Activated B cell treated with CpG ODN at 0.5 μM for 24 hours (primary cell): ENCODE measurements at regions of chr21 and their contacts with region 1.

Region 1: DNA sequence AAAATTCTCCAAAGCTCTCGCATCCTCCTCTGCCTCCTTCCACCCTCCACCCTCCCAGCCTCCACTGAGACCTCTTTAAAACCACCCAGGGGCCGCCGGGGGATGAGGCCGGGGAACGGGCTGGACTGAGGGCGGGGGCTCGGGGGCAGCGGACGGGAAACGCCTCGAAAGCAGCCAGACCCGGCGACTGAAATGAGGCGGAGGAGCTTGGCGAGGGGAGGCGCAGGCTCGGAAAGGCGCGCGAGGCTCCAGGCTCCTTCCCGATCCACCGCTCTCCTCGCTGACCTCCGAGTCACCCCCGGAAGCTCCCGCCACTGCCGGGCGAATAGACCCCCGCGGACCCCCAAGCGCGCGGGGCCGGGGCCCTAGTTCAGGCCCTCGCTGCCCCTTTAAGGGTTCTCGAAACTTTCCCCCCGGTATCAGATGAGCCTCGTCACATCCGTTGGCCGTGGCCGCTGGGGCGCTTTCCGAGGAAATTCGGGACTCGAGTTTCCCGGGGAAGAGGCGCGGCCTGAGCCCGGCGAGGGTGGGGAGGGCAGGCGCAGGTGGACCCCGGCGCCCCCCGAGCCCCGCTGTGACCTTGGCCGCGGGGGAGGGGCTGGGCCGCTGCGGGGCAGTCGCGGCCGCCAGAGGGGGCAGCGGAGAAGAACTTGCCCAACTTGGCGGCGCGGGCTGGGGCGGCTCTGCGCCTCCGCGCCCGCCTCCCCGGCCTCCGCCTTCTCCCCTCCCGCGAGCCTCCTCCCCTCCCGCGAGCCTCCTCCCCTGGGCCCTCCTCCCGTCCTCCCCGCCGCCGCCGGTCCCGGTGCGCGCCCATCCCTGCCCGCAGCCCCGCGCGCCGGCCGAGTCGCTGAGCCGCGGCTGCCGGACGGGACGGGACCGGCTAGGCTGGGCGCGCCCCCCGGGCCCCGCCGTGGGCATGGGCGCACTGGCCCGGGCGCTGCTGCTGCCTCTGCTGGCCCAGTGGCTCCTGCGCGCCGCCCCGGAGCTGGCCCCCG is at the start of gene BACE2:
- DNase-seq: peak; percentile 77
- ATAC-seq: peak; percentile 87
- H3K4me3 Mint-ChIP-seq: peak within 1 kb of the TSS; percentile 88
- H3K27ac Mint-ChIP-seq: peak within 1 kb of the TSS; percentile 69
- H3K4me1 Mint-ChIP-seq: peaks cover 26% of the 10 kb centered on the region
- H3K27me3 Mint-ChIP-seq: peaks cover 5% of the 10 kb centered on the region
- CTCF ChIP-seq: no peak
- total RNA-seq, gene BACE2: 13.0 and 17.1 TPM in 2 replicates

Region 2: GRCh38 chr21:41121785-41122421 is 45.7 kb before region 1 on chr21:
- CTCF ChIA-PET with region 1: no interaction called
- POLR2A ChIA-PET with region 1: no interaction called
- intact Hi-C with region 1: no loop called
- DNase-seq: peak; percentile 41
- ATAC-seq: peak; percentile 31
- H3K4me3 Mint-ChIP-seq: no peak overlapping the region
- H3K27ac Mint-ChIP-seq: no peak overlapping the region
- H3K4me1 Mint-ChIP-seq: no peaks in the 10 kb centered on the region
- H3K27me3 Mint-ChIP-seq: peaks cover 5% of the 10 kb centered on the region
- CTCF ChIP-seq: no peak

Region 3: DNA sequence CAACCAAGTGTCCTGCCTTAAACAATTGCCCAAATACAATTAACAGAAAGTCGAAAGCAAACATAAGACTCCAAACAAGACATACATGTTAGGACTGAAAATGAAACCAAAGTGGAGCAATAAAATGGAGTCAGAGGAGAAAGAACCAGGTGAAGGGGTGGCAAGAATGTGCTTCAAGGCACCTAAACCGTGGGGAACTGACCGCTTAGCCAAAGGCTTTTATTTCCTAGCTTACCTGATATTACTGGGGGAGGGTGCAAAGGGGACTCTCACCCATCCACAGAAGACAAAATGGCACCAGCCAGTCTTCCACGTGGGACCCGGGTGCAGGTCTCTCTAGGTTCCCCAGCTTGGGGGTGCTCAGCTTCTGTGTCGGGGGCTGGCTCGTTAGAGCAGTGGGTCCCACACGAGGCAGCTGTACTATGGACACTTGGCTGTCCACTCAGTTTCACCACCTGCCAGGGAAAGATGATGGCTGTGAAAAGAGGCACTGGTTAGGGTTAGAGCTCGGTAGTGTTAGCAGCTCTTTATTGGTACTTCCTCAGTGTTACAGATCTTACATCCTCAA is 18.3 kb after region 1 on chr21:
- CTCF ChIA-PET with region 1: interaction called, 7 read pairs
- POLR2A ChIA-PET with region 1: interaction called, 6 read pairs
- intact Hi-C with region 1: loop called (anchors 2 kb)
- DNase-seq: no peak
- ATAC-seq: no peak
- H3K4me3 Mint-ChIP-seq: no peak overlapping the region
- H3K27ac Mint-ChIP-seq: no peak overlapping the region
- H3K4me1 Mint-ChIP-seq: peaks cover 47% of the 10 kb centered on the region
- H3K27me3 Mint-ChIP-seq: no peaks in the 10 kb centered on the region
- CTCF ChIP-seq: no peak

Region 4: DNA sequence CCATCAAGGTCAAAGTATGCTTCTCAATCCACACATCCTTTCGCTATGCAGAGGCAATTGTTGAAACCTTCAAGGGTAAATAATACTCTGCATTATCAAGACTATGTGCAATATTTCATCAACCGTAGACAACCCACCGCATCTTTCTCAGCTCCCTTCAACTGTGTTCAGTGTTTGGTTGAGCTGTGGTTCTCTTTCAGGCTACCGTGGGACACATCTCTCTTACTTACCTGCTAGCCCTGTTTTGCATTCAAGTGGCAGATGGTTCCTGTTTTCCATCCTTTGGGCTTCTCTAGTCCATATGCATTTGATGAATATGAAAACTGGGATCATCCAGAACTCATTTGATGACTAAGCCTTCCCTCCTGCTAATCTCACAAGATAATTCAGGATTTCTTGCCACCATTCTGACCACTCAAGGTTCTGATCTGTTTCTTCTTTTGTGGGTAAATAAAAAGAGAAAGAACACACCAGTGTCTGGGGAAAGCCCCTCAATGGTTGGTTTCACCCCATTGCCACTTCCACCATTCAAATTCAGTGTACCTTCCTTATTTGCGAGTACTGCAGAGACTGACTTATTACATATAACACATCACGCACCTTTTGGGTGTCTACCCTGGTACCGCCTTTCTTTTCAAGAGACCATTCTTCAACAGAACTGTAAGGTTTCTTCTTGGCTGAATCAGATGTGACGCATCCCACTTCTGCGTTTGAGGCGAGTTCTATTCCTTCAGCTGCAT is 62.0 kb after region 1 on chr21:
- CTCF ChIA-PET with region 1: interaction called, 22 read pairs
- POLR2A ChIA-PET with region 1: interaction called, 9 read pairs
- intact Hi-C with region 1: loop called (anchors 1 kb)
- DNase-seq: no peak
- ATAC-seq: peak; percentile 82
- H3K4me3 Mint-ChIP-seq: peak overlapping the region; percentile 78
- H3K27ac Mint-ChIP-seq: peak overlapping the region; percentile 91
- H3K4me1 Mint-ChIP-seq: peaks cover 82% of the 10 kb centered on the region
- H3K27me3 Mint-ChIP-seq: no peaks in the 10 kb centered on the region
- CTCF ChIP-seq: no peak

Region 5: GRCh38 chr21:41425954-41426675 is 258.5 kb after region 1 on chr21 and contains the start of gene MX1:
- CTCF ChIA-PET with region 1: no interaction called
- POLR2A ChIA-PET with region 1: interaction called, 8 read pairs
- intact Hi-C with region 1: loop called (anchors 2 kb)
- DNase-seq: peak; percentile 77
- ATAC-seq: peak; percentile 97
- H3K4me3 Mint-ChIP-seq: peak within 1 kb of the TSS; percentile 96
- H3K27ac Mint-ChIP-seq: peak within 1 kb of the TSS; percentile 91
- H3K4me1 Mint-ChIP-seq: peaks cover 85% of the 10 kb centered on the region
- H3K27me3 Mint-ChIP-seq: no peaks in the 10 kb centered on the region
- CTCF ChIP-seq: no peak
- total RNA-seq, gene MX1: 64.2 and 64.8 TPM in 2 replicates